Lower lobe of right lung (tissue), 2 donors: ENCODE measurements at regions of chr5 and their contacts with region 1.

Region 1: GRCh38 chr5:12292610-12293204 is 388.5 kb upstream of the CTNND2 start:
- DNase-seq: no peak
- ATAC-seq: no peak
- H3K4me3 ChIP-seq: no peak overlapping the region
- H3K27ac ChIP-seq: no peak overlapping the region
- H3K4me1 ChIP-seq: no peaks in the 10 kb centered on the region
- H3K27me3 ChIP-seq: no peaks in the 10 kb centered on the region
- CTCF ChIP-seq: no peak

Region 2: GRCh38 chr5:12413075-12413474 is 120.4 kb after region 1 on chr5:
- intact Hi-C with region 1: no loop called
- DNase-seq: no peak
- ATAC-seq: no peak
- H3K4me3 ChIP-seq: no peak overlapping the region
- H3K27ac ChIP-seq: no peak overlapping the region
- H3K4me1 ChIP-seq: no peaks in the 10 kb centered on the region
- H3K27me3 ChIP-seq: no peaks in the 10 kb centered on the region
- CTCF ChIP-seq: no peak

Region 3: GRCh38 chr5:12477556-12477955 is 184.8 kb after region 1 on chr5:
- intact Hi-C with region 1: no loop called
- DNase-seq: no peak
- ATAC-seq: no peak
- H3K4me3 ChIP-seq: no peak overlapping the region
- H3K27ac ChIP-seq: no peak overlapping the region
- H3K4me1 ChIP-seq: no peaks in the 10 kb centered on the region
- H3K27me3 ChIP-seq: no peaks in the 10 kb centered on the region
- CTCF ChIP-seq: no peak

Region 4: DNA sequence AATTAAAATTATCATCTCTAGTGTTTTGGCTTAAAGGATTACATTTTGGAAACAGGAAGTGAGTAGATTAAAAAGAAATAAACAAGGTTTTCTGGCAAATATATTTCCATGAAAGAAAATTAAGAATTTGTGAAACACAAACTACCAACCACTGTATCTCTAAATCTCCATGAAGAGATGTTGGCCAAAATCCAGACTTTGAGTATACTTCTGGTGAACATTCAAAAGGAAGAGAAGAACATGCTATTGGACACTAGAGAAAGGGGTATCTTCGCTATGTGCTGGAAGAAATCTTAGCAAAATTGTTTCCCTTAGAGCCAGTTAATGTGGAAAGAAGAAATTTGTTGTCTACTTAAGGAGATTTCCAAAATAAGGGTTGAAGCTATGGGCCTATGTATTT is 321.9 kb after region 1 on chr5:
- intact Hi-C with region 1: no loop called
- DNase-seq: no peak
- ATAC-seq: no peak
- H3K4me3 ChIP-seq: no peak overlapping the region
- H3K27ac ChIP-seq: no peak overlapping the region
- H3K4me1 ChIP-seq: no peaks in the 10 kb centered on the region
- H3K27me3 ChIP-seq: no peaks in the 10 kb centered on the region
- CTCF ChIP-seq: no peak

Region 5: GRCh38 chr5:12691258-12691657 is 398.6 kb after region 1 on chr5:
- intact Hi-C with region 1: no loop called
- DNase-seq: no peak
- ATAC-seq: no peak
- H3K4me3 ChIP-seq: no peak overlapping the region
- H3K27ac ChIP-seq: no peak overlapping the region
- H3K4me1 ChIP-seq: no peaks in the 10 kb centered on the region
- H3K27me3 ChIP-seq: no peaks in the 10 kb centered on the region
- CTCF ChIP-seq: no peak

Region 6: DNA sequence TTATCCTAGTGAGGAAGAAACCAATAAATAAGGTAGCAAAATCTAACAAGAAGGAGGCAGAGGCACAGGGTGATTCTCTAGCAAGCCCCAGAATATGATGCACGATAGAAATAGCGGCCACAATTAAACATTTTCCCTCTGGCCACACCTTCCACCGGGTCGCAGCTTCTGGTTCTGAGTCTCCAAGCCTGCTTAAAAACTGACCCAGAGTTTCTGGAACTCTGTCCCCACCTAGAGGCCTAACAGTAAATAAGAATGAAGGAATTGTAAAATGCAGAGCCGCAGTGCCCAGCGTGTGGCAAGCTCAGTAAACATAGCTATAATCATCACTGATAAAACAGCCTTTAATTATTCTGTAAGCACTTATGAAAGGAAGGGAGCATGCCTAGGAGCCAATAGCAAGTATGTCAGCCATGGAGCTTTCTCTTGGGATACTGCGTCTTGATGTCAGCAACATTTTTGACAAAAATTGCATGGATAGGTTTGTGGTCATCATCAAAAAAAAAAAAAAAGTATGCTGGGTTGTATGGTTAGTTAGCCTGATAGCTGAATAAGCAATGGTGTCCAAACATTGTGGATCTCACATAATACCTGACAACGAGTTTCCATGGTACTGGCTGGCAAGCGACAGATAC is 1186.2 kb after region 1 on chr5:
- intact Hi-C with region 1: loop called (anchors 10 kb)
- DNase-seq: no peak
- ATAC-seq: peak in 1 of 2 donors; percentile 40
- H3K4me3 ChIP-seq: no peak overlapping the region
- H3K27ac ChIP-seq: no peak overlapping the region
- H3K4me1 ChIP-seq: no peaks in the 10 kb centered on the region
- H3K27me3 ChIP-seq: no peaks in the 10 kb centered on the region
- CTCF ChIP-seq: peak; percentile 43